K562 (cell line): ENCODE measurements at regions of chr13 and their contacts with region 1.

Region 1: GRCh38 chr13:46321494-46322225 is 65.4 kb downstream of the RUBCNL start:
- DNase-seq: peak; percentile 43 to 68 (median 50)
- ATAC-seq: peak; percentile 91
- H3K4me3 ChIP-seq: no peak overlapping the region
- H3K27ac ChIP-seq: no peak overlapping the region
- H3K4me1 ChIP-seq: no peaks in the 10 kb centered on the region; a peak in 1 of 5 replicates
- H3K27me3 ChIP-seq: no peaks in the 10 kb centered on the region
- CTCF ChIP-seq: peak; percentile 70 to 82 (median 71)
- EP300 ChIP-seq: no peak
- POLR2A ChIP-seq: no peak
- RAD21 ChIP-seq: peak; percentile 74 to 85

Region 2: GRCh38 chr13:45623515-45624090 is 698.1 kb before region 1 on chr13:
- CTCF ChIA-PET with region 1: no interaction called
- POLR2A ChIA-PET with region 1: no interaction called
- in situ Hi-C with region 1: no loop called
- intact Hi-C with region 1: loop called (anchors 10 kb)
- DNase-seq: peak; percentile 6 to 20 (median 14)
- ATAC-seq: 0 out of 3 replicates have a peak, but pooled peaks have one; percentile 49
- H3K4me3 ChIP-seq: no peak overlapping the region
- H3K27ac ChIP-seq: no peak overlapping the region
- H3K4me1 ChIP-seq: no peaks in the 10 kb centered on the region
- H3K27me3 ChIP-seq: peaks cover 0 to 4% of the 10 kb centered on the region in 2 experiments; a peak in 1 of 5 replicates
- CTCF ChIP-seq: peak; percentile 40 to 54 (median 41); a peak in 4 of 6 replicates
- EP300 ChIP-seq: no peak
- POLR2A ChIP-seq: no peak
- RAD21 ChIP-seq: peak; percentile 57 to 64

Region 3: DNA sequence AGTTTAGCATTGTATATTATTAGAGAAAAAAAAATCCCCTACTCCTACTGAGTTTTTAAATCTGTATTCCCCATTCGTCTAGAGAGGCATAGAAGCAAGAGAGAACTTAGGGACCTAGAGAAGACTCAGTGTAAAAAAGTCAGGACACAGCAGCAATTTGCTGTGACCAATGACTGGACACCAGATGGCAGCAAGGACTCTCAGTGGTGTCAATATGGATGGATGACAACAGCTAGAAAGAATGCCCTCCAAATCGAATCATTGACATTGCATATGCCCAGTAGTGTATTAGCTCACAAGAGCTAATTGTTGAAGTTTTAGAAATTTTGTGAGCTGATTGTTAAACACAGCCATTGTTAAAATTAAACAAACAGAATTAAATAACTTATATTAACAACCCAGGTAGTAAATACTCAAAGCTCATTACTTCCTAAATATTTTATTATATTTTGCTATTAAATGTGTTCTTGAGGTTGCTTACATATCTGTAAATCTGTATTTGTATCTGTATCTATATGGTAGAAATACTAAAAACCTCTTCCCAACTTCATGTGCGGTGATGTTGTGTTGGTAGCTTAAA is 514.0 kb before region 1 on chr13:
- CTCF ChIA-PET with region 1: interaction called, 3 read pairs
- POLR2A ChIA-PET with region 1: no interaction called
- in situ Hi-C with region 1: no loop called
- intact Hi-C with region 1: loop called (anchors 1 kb)
- DNase-seq: peak; percentile 15 to 44 (median 28)
- ATAC-seq: peak; percentile 80
- H3K4me3 ChIP-seq: no peak overlapping the region
- H3K27ac ChIP-seq: no peak overlapping the region
- H3K4me1 ChIP-seq: no peaks in the 10 kb centered on the region
- H3K27me3 ChIP-seq: peaks cover 0 to 8% of the 10 kb centered on the region in 2 experiments; a peak in 2 of 5 replicates
- CTCF ChIP-seq: peak; percentile 48 to 52 (median 48); a peak in 5 of 6 replicates
- EP300 ChIP-seq: no peak
- POLR2A ChIP-seq: no peak
- RAD21 ChIP-seq: peak; percentile 59 to 79

Region 4: GRCh38 chr13:45925151-45925550 is 396.5 kb before region 1 on chr13:
- CTCF ChIA-PET with region 1: interaction called, 3 read pairs
- POLR2A ChIA-PET with region 1: no interaction called
- in situ Hi-C with region 1: loop called (anchors 25 kb)
- intact Hi-C with region 1: loop called (anchors 5 kb)
- DNase-seq: peak in 3 of 4 experiments; percentile 8 to 13 (median 9)
- ATAC-seq: peak; percentile 67
- H3K4me3 ChIP-seq: no peak overlapping the region
- H3K27ac ChIP-seq: no peak overlapping the region
- H3K4me1 ChIP-seq: peaks cover 0 to 3% of the 10 kb centered on the region in 2 experiments; a peak in 1 of 5 replicates
- H3K27me3 ChIP-seq: peaks cover 5 to 29% of the 10 kb centered on the region in 2 experiments; a peak in 3 of 5 replicates
- CTCF ChIP-seq: peak; percentile 22 to 51 (median 41); a peak in 5 of 6 replicates
- EP300 ChIP-seq: no peak
- POLR2A ChIP-seq: no peak
- RAD21 ChIP-seq: peak in 1 of 2 experiments; percentile 52; a peak in 2 of 4 replicates

Region 5: DNA sequence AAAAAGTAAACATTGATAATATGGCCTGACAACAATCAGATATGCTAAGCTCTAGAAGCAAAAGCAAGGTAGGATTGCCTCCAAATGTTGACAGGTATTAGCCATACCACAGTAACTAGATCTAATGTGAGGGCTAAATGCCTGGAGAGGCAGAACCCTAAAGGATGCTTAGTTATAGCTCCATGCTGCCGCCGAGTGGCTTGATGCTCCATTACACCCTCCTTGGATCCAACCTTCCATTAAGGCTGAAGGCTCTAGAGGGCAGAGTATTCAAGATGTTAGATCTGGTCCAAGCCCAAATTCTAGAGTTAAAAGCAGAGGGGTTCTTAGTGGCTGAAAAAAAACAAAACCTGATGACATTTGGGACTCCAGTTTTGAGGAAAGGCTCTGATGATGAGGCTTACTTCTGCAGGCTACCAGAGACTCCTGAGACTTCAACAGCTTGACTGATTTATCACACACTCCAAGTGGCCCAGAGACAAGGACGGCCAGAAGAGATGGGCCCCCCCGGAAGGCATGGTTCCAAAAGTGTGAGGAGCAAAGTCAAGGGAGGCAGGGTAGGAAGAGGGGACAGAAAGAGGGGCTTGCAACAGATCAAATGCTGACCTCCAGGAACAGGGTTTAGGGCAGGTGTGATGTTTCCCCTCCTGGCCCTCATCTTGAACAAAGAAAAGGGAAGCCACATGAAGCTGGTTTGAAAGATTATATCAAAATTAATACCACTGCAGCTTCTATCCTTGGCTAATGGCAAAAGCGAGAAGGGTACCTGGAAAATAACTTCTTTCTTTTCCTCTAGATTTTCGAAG is 194.9 kb before region 1 on chr13:
- CTCF ChIA-PET with region 1: interaction called, 5 read pairs
- POLR2A ChIA-PET with region 1: no interaction called
- in situ Hi-C with region 1: no loop called
- intact Hi-C with region 1: loop called (anchors 2 kb)
- DNase-seq: peak; percentile 66 to 81 (median 67)
- ATAC-seq: peak; percentile 95
- H3K4me3 ChIP-seq: no peak overlapping the region
- H3K27ac ChIP-seq: no peak overlapping the region
- H3K4me1 ChIP-seq: peaks cover 0 to 20% of the 10 kb centered on the region in 2 experiments; a peak in 3 of 5 replicates
- H3K27me3 ChIP-seq: no peaks in the 10 kb centered on the region
- CTCF ChIP-seq: peak; percentile 86 to 98 (median 98)
- EP300 ChIP-seq: no peak
- POLR2A ChIP-seq: no peak
- RAD21 ChIP-seq: peak; percentile 85 to 90

Region 6: GRCh38 chr13:46137627-46138317 is 183.9 kb before region 1 on chr13:
- CTCF ChIA-PET with region 1: no interaction called
- POLR2A ChIA-PET with region 1: no interaction called
- in situ Hi-C with region 1: no loop called
- intact Hi-C with region 1: no loop called
- DNase-seq: no peak
- ATAC-seq: no peak
- H3K4me3 ChIP-seq: no peak overlapping the region
- H3K27ac ChIP-seq: no peak overlapping the region
- H3K4me1 ChIP-seq: no peaks in the 10 kb centered on the region
- H3K27me3 ChIP-seq: no peaks in the 10 kb centered on the region
- CTCF ChIP-seq: no peak
- EP300 ChIP-seq: no peak
- POLR2A ChIP-seq: no peak
- RAD21 ChIP-seq: no peak

Region 7: GRCh38 chr13:46288570-46289259 is 32.9 kb before region 1 on chr13:
- CTCF ChIA-PET with region 1: no interaction called
- POLR2A ChIA-PET with region 1: no interaction called
- in situ Hi-C with region 1: no loop called
- intact Hi-C with region 1: loop called (anchors 2 kb)
- DNase-seq: peak; percentile 26 to 63 (median 38)
- ATAC-seq: peak; percentile 72
- H3K4me3 ChIP-seq: no peak overlapping the region
- H3K27ac ChIP-seq: no peak overlapping the region
- H3K4me1 ChIP-seq: peaks cover 2 to 15% of the 10 kb centered on the region in 2 experiments; a peak in 3 of 5 replicates
- H3K27me3 ChIP-seq: no peaks in the 10 kb centered on the region
- CTCF ChIP-seq: peak; percentile 52 to 67 (median 65); a peak in 5 of 6 replicates
- EP300 ChIP-seq: no peak
- POLR2A ChIP-seq: no peak
- RAD21 ChIP-seq: peak; percentile 41 to 76; a peak in 2 of 4 replicates